ENCODE measurements at regions of chr14 and their contacts with region 1.

Region 1: DNA sequence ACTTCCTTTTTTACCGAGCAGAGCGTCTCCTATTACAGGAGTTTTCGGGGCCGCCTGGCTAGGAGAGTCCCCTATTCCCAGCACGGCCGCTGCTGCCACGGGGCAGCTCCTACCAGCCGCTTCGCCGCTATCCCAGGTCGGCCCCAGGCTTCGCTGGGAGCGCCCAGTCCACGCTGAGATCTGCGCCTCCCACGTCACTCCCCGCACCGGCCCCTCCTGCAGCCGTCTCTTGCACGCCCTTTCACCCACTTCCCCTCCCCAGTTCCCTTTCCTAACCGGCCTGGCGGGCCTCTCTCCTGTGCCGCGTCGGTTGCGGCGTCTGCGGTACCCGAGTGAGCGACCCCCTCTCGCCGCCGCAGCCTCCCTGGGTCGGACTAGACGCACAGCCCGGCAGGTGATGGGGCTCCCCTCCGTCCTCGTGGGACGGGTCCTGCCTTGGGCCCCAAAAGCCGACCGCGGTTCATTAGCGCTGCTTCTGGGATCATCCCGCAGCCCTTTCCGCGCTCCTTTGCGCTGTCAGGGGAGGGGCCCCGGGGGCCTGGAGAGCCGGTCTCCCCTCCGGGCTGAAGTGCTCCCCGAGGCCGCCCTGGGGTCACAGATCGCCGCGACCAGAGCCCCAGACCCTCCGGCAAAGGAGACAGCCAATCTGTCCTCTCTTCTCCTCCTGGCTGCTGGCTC is 1318.4 kb downstream of the TMEM121 start:
- DNase-seq: peak; percentile 80
- H3K4me3 Mint-ChIP-seq: peak overlapping the region; percentile 81
- H3K27ac Mint-ChIP-seq: peak overlapping the region; percentile 73
- H3K4me1 Mint-ChIP-seq: peaks cover 37% of the 10 kb centered on the region
- H3K27me3 Mint-ChIP-seq: peaks cover 19% of the 10 kb centered on the region

Region 2: DNA sequence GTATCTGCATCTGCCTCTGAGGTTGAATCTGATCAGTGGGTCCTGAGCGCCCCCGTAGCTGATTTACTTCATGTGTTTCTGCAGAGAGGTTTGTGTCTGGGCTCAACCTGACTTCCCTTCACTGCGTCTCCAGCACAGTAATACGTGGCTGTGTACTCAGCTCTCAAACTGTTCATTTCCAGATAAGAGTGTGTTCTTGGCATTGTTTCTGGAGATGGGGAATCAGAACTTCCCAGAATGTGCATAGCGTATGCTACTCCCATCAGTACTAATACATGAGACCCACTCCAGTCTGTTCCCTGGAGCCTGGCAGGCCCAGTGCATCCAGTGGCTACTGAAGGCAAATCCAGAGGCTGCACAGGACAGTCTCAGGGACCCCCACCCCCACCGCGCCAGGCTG is 21.2 kb before region 1 on chr14:
- CTCF ChIA-PET with region 1: interaction called, 12 read pairs
- DNase-seq: no peak
- H3K4me3 Mint-ChIP-seq: no peak overlapping the region
- H3K27ac Mint-ChIP-seq: no peak overlapping the region
- H3K4me1 Mint-ChIP-seq: no peaks in the 10 kb centered on the region
- H3K27me3 Mint-ChIP-seq: peaks cover 34% of the 10 kb centered on the region

Region 3: GRCh38 chr14:106872611-106873446 is 28.1 kb after region 1 on chr14:
- CTCF ChIA-PET with region 1: interaction called, 79 read pairs
- DNase-seq: peak; percentile 88
- H3K4me3 Mint-ChIP-seq: peak overlapping the region; percentile 31
- H3K27ac Mint-ChIP-seq: no peak overlapping the region
- H3K4me1 Mint-ChIP-seq: peaks cover 23% of the 10 kb centered on the region
- H3K27me3 Mint-ChIP-seq: peaks cover 65% of the 10 kb centered on the region